Thyroid gland (tissue), 4 donors: ENCODE measurements at regions of chr14 and their contacts with region 1.

Region 1: DNA sequence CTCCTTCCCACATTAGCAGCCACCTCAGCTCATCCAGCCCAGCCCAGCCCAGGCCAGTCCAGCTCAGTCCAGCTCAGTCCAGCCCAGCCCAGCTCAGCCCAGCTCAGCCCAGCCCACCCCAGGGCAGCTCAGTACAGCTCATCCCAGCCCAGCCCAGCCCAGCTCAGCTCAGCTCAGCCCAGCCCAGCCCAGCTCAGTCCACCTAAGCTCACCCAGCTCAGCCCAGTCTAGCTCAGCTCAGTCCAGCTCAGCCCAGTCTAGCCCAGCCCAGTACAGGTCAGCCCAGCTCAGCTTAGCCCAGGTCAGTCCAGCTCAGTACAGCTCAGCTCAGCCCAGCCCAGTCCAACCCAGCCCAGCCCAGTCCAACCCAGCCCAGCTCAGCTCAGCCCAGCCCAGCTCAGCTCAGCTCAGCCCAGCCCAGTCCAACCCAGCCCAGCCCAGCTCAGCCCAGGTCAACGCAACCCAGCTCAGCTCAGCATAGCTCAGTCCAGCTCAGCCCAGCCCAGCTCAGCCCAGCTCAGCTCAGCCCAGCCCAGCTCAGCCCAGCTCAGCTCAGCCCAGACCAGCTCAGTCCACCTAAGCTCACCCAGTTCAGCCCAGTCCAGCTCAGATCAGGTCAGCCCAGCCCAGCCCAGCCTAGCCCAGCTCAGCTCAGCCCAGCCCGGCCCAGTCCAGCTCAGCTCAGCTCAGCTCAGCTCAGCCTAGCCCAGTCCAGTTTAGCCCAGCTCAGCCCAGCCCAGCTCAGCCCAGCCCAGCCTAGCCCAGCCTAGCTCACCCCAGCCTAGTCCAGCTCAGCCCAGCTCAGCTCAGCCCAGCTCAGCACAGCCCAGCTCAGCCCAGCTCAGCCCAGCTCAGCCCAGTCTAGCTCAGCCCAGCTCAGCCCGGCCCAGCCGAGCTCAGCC is 63.0 kb downstream of the TMEM121 start:
- DNase-seq: no peak
- H3K4me3 ChIP-seq: no peak overlapping the region
- H3K27ac ChIP-seq: no peak overlapping the region
- H3K4me1 ChIP-seq: no peaks in the 10 kb centered on the region
- H3K27me3 ChIP-seq: no peaks in the 10 kb centered on the region
- CTCF ChIP-seq: no peak
- POLR2A ChIP-seq: no peak

Region 2: DNA sequence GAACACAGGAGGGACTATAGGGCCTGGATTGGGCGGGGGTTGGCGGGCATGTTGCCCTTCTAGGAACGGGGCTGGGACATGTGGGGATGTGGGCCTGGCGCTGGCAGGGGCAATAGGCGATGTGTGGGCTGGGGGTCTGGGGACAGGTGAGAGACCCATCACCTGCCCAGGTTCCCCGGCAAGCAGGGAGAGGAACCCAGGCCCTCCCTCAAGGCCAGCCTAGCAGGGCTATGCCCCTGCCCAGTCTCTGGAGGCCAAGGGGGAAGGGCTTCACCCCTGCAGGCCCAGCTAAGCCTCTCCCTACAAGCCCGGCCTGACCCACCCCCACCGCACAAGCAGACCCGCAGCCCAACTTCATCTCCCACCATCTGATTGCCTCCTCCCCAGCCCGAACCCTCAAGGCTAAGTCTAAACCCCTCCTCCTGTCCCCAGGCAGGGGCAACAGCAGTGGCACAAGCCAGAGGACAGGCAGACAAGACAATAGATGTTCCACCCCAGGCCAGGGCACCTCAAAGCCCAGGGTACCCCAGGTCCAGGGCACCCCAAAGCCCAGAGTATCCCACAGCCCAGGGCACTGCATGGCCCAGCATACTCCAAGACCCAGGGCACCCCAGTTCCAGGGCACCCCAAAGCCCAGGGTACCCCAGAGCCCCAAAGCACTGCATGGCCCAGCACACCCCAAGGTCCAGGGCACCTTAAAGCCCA is 427.3 kb before region 1 on chr14:
- intact Hi-C with region 1: no loop called
- DNase-seq: no peak
- H3K4me3 ChIP-seq: no peak overlapping the region
- H3K27ac ChIP-seq: no peak overlapping the region
- H3K4me1 ChIP-seq: peaks cover 0 to 2% of the 10 kb centered on the region in 2 donors
- H3K27me3 ChIP-seq: no peaks in the 10 kb centered on the region
- CTCF ChIP-seq: no peak
- POLR2A ChIP-seq: no peak

Region 3: DNA sequence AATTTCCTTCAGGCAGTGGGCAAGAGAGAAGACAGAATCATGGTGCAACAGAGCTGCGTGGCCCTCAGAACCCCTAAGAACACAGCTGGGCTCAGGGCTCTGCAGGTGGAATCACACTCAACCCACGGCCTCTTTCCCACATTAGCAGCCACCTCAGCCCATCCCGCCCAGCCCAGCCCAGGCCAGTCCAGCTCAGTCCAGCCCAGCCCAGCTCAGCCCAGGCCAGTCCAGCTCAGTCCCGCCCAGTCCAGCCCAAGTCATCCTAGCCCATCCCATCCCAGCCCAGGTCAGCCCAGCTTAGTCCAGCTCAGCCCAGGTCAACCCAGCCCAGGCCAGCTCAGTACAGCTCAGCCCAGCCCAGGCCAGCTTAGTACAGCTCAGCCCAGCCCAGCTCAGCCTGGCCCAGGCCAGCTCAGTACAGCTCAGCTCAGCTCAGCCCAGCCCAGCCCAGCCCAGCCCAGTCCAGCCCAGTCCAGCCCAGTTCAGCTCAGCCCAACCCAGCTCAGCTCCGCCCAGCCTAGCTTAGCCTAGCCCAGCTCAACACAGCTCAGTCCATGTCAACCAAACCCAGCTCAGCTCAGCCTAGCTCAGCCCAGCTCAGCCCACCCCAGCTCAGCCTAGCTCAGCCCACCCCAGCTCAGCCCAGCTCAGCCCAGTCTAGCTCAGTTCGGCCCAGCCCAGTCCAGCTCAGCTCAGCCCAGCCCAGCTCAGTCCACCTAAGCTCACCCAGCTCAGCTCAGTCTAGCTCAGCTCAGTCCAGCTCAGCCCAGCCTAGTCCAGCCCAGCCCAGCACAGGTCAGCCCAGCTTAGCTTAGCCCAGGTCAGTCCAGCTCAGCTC is 120.1 kb after region 1 on chr14:
- intact Hi-C with region 1: loop called (anchors 5 kb)
- DNase-seq: no peak
- H3K4me3 ChIP-seq: no peak overlapping the region
- H3K27ac ChIP-seq: no peak overlapping the region
- H3K4me1 ChIP-seq: no peaks in the 10 kb centered on the region
- H3K27me3 ChIP-seq: no peaks in the 10 kb centered on the region
- CTCF ChIP-seq: no peak
- POLR2A ChIP-seq: no peak